HEK293 (cell line): ENCODE measurements at regions of chr2 and their contacts with region 1.

Region 1: GRCh38 chr2:118855451-118856279 is 8.2 kb upstream of the EN1 start:
- H3K4me3 ChIP-seq: peak overlapping the region; percentile 37
- H3K27ac ChIP-seq: no peak overlapping the region
- H3K4me1 ChIP-seq: no peaks in the 10 kb centered on the region
- CTCF ChIP-seq: peak; percentile 89

Region 2: GRCh38 chr2:118207889-118208288 is 647.8 kb before region 1 on chr2:
- CTCF ChIA-PET with region 1: interaction called, 11 read pairs
- POLR2A ChIA-PET with region 1: no interaction called
- H3K4me3 ChIP-seq: no peak overlapping the region
- H3K27ac ChIP-seq: no peak overlapping the region
- H3K4me1 ChIP-seq: no peaks in the 10 kb centered on the region
- CTCF ChIP-seq: no peak

Region 3: GRCh38 chr2:118221666-118222594 is 633.7 kb before region 1 on chr2:
- CTCF ChIA-PET with region 1: interaction called, 13 read pairs
- POLR2A ChIA-PET with region 1: no interaction called
- H3K4me3 ChIP-seq: no peak overlapping the region
- H3K27ac ChIP-seq: no peak overlapping the region
- H3K4me1 ChIP-seq: no peaks in the 10 kb centered on the region
- CTCF ChIP-seq: peak; percentile 45; the same call in 1 of the 2 replicates

Region 4: DNA sequence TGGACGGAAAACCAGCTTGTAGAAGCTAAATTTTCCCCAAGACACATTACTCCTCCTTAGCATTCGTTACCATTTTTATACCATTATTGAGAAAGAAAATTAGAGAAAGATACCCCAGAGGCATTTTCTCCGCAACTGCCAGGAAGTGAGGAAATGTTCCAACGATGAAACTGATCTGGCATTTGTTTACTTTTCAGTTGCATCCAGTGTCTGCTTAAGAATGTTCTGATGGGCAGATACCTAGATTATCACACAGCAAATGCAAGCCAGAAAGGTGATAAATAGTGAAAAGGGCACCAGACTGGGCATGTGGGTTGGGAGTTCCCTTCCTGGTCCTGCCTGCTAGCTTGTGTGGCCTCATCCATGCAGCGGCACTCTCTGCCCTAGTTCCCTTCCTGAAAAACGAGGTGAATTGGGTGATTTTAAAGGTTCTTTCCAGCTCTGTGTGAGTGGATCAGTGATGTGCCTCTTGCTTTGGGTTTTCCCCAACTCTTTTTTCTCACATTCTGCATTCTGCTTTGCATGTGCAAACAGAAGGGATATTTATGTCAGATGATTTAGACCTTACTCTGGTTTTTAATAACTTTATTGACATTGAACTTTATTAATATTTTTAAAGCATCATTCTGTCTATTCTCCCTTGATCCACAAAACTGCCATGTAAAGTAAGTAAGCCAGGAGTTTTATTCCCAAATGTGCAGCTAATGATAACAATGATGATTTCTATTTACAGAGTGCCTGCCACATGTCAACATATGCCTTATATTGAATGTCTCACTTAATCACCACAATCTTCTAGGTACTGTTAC is 627.8 kb before region 1 on chr2:
- CTCF ChIA-PET with region 1: interaction called, 13 read pairs
- POLR2A ChIA-PET with region 1: no interaction called
- H3K4me3 ChIP-seq: no peak overlapping the region
- H3K27ac ChIP-seq: no peak overlapping the region
- H3K4me1 ChIP-seq: no peaks in the 10 kb centered on the region
- CTCF ChIP-seq: no peak

Region 5: GRCh38 chr2:118371515-118371914 is 484.1 kb before region 1 on chr2:
- CTCF ChIA-PET with region 1: interaction called, 11 read pairs
- POLR2A ChIA-PET with region 1: no interaction called
- H3K4me3 ChIP-seq: no peak overlapping the region
- H3K27ac ChIP-seq: no peak overlapping the region
- H3K4me1 ChIP-seq: no peaks in the 10 kb centered on the region
- CTCF ChIP-seq: peak; percentile 44; the same call in 1 of the 2 replicates

Region 6: GRCh38 chr2:118834901-118835745 is 20.5 kb before region 1 on chr2:
- CTCF ChIA-PET with region 1: no interaction called
- POLR2A ChIA-PET with region 1: no interaction called
- H3K4me3 ChIP-seq: no peak overlapping the region
- H3K27ac ChIP-seq: no peak overlapping the region
- H3K4me1 ChIP-seq: no peaks in the 10 kb centered on the region
- CTCF ChIP-seq: no peak